ENCODE measurements at regions of chr10 and their contacts with region 1.

Region 1: GRCh38 chr10:121828045-121828444 is 99.8 kb downstream of the ATE1 start:
- DNase-seq: no peak
- ATAC-seq: no peak
- H3K4me3 ChIP-seq: no peak overlapping the region
- H3K4me3 Mint-ChIP-seq: no peak overlapping the region
- H3K27ac ChIP-seq: no peak overlapping the region
- H3K27ac Mint-ChIP-seq: no peak overlapping the region
- H3K4me1 ChIP-seq: no peaks in the 10 kb centered on the region
- H3K4me1 Mint-ChIP-seq: peaks cover 0 to 4% (median 0%) of the 10 kb centered on the region in 3 donors
- H3K27me3 ChIP-seq: no peaks in the 10 kb centered on the region
- H3K27me3 Mint-ChIP-seq: no peaks in the 10 kb centered on the region

Region 2: GRCh38 chr10:121792198-121792597 is 35.8 kb before region 1 on chr10:
- CTCF ChIA-PET with region 1: interaction called in 1 of 2 experiments, 10 read pairs
- POLR2A ChIA-PET with region 1: no interaction called
- DNase-seq: no peak
- ATAC-seq: no peak
- H3K4me3 ChIP-seq: no peak overlapping the region
- H3K4me3 Mint-ChIP-seq: no peak overlapping the region
- H3K27ac ChIP-seq: no peak overlapping the region
- H3K27ac Mint-ChIP-seq: no peak overlapping the region
- H3K4me1 ChIP-seq: no peaks in the 10 kb centered on the region
- H3K4me1 Mint-ChIP-seq: peaks cover 0 to 3% (median 0%) of the 10 kb centered on the region in 3 donors
- H3K27me3 ChIP-seq: no peaks in the 10 kb centered on the region
- H3K27me3 Mint-ChIP-seq: no peaks in the 10 kb centered on the region

Measured in T-cell (primary cell).